OCI-LY7 (cell line): ENCODE measurements at regions of chr9 and their contacts with region 1.

Region 1: GRCh38 chr9:71446473-71447411 is 321.6 kb downstream of the CEMIP2 start:
- DNase-seq: no peak
- H3K4me3 ChIP-seq: no peak overlapping the region
- H3K27ac ChIP-seq: no peak overlapping the region
- H3K4me1 ChIP-seq: no peaks in the 10 kb centered on the region
- CTCF ChIP-seq: no peak

Region 2: DNA sequence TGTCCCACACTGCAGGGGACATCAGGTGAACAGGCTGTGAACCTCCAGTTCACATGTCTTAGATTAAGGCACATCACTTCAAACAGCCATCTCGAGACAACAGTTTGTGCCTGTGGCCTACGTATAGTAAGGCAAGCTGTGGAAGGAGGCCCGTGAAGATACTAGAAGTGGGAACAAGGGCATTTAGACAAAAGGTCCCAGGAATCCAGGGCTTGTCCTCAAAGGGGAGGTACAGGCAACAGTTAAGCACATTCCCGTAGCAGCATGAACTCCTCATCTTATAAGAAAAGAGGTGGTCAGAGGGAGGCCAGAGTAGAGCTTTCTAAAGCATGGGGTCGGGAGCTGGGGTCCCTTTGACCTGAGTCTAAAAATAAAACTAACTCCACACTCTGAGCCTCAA is 202.8 kb before region 1 on chr9:
- CTCF ChIA-PET with region 1: no interaction called
- POLR2A ChIA-PET with region 1: no interaction called
- intact Hi-C with region 1: no loop called
- DNase-seq: no peak
- H3K4me3 ChIP-seq: no peak overlapping the region
- H3K27ac ChIP-seq: no peak overlapping the region
- H3K4me1 ChIP-seq: no peaks in the 10 kb centered on the region
- CTCF ChIP-seq: no peak

Region 3: DNA sequence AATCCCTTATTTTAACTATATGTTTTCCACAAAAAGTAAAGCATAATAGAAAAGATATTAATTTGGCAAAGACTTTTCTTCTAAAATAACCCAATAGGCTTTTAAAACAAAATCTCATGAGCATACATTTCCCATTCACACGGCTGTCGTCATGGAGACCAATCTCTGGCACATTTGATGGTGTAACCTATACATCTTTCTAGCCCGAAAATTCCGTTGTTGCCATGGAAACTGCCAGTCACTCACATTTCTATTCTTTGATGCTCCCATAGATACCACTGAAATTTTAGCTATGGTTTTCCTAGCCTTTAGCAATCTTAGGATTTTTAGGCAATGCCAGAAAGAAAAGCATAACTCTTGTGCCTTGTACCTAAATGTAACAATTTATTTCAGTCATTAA is 62.4 kb before region 1 on chr9:
- CTCF ChIA-PET with region 1: no interaction called
- POLR2A ChIA-PET with region 1: interaction called, 4 read pairs
- intact Hi-C with region 1: loop called (anchors 10 kb)
- DNase-seq: no peak
- H3K4me3 ChIP-seq: no peak overlapping the region
- H3K27ac ChIP-seq: no peak overlapping the region
- H3K4me1 ChIP-seq: no peaks in the 10 kb centered on the region
- CTCF ChIP-seq: no peak

Region 4: DNA sequence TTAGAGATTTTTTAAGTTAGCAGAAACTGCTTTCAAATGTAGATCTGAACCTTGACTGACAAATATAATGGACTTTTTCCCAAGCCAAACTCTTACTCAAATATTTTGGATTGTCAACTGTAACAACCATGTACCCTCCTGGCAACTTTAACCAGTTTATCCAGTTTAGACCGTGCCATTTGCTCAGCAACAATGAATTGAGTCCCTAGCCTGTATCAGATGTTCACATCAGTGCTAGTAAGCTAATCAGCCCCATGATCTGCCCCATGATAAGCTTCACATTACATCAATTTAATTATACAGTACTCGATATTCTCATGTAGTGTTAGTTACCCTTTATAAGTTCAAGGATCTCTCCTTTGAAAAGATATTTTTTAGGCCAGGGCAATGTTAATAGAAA is 48.9 kb before region 1 on chr9:
- CTCF ChIA-PET with region 1: no interaction called
- POLR2A ChIA-PET with region 1: no interaction called
- intact Hi-C with region 1: no loop called
- DNase-seq: no peak
- H3K4me3 ChIP-seq: no peak overlapping the region
- H3K27ac ChIP-seq: no peak overlapping the region
- H3K4me1 ChIP-seq: no peaks in the 10 kb centered on the region
- CTCF ChIP-seq: no peak

Region 5: GRCh38 chr9:71431931-71432330 is 14.8 kb before region 1 on chr9:
- CTCF ChIA-PET with region 1: no interaction called
- POLR2A ChIA-PET with region 1: no interaction called
- intact Hi-C with region 1: no loop called
- DNase-seq: no peak
- H3K4me3 ChIP-seq: no peak overlapping the region
- H3K27ac ChIP-seq: no peak overlapping the region
- H3K4me1 ChIP-seq: no peaks in the 10 kb centered on the region
- CTCF ChIP-seq: no peak